ENCODE measurements at regions of chr4 and their contacts with region 1.

Region 1: GRCh38 chr4:73653695-73654106 is 33.5 kb upstream of the RASSF6 start:
- DNase-seq: peak; percentile 11
- H3K4me3 Mint-ChIP-seq: no peak overlapping the region
- H3K27ac Mint-ChIP-seq: no peak overlapping the region
- H3K4me1 Mint-ChIP-seq: no peaks in the 10 kb centered on the region
- H3K27me3 Mint-ChIP-seq: peaks cover 10% of the 10 kb centered on the region

Region 2: DNA sequence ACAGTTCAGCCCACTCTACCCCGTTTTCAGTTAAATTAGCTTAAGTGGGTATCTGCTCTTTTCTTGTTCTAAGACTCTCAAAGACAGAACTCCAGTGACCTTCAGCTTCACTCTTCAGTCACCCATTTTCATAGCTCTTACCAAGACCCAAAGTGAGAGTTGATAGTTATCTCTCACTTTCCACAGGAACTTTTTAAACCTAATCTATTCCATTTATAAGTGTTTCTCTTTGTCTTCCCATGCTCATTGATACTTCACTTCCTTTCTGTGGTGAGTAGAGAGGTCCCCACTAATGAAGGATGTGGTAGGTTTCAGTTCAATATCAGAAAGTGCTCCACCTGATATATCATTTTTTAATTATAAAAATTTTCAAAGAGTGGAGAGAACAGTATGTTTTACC is 617.6 kb before region 1 on chr4:
- CTCF ChIA-PET with region 1: no interaction called
- intact Hi-C with region 1: loop called (anchors 5 kb)
- DNase-seq: no peak
- H3K4me3 Mint-ChIP-seq: no peak overlapping the region
- H3K27ac Mint-ChIP-seq: no peak overlapping the region
- H3K4me1 Mint-ChIP-seq: peaks cover 13% of the 10 kb centered on the region
- H3K27me3 Mint-ChIP-seq: peaks cover 2% of the 10 kb centered on the region

Region 3: GRCh38 chr4:73308286-73308685 is 345.4 kb before region 1 on chr4:
- CTCF ChIA-PET with region 1: interaction called, 3 read pairs
- intact Hi-C with region 1: loop called (anchors 1 kb)
- DNase-seq: no peak
- H3K4me3 Mint-ChIP-seq: no peak overlapping the region
- H3K27ac Mint-ChIP-seq: no peak overlapping the region
- H3K4me1 Mint-ChIP-seq: no peaks in the 10 kb centered on the region
- H3K27me3 Mint-ChIP-seq: no peaks in the 10 kb centered on the region

Region 4: DNA sequence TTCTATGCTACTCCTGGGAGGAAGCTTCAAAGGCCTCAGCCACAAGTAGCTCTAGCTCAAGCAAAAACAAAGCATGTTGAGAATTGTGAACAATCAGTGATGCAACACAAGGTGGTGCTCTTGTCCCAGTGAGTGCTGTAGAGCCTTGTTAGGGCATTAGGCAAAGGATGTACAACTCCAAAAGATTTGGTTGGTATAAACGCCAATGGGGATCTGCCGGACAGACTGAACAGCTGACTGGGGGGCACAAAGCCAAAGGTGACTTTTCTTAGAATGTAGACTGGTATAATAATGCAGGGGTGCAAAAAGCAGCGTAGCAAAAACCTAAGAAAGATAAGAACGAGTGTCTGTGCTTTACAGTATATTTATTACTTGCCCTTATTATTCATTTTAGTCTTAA is 312.2 kb before region 1 on chr4:
- CTCF ChIA-PET with region 1: interaction called, 9 read pairs
- intact Hi-C with region 1: loop called (anchors 1 kb)
- DNase-seq: peak; percentile 36
- H3K4me3 Mint-ChIP-seq: no peak overlapping the region
- H3K27ac Mint-ChIP-seq: no peak overlapping the region
- H3K4me1 Mint-ChIP-seq: no peaks in the 10 kb centered on the region
- H3K27me3 Mint-ChIP-seq: no peaks in the 10 kb centered on the region

Region 5: DNA sequence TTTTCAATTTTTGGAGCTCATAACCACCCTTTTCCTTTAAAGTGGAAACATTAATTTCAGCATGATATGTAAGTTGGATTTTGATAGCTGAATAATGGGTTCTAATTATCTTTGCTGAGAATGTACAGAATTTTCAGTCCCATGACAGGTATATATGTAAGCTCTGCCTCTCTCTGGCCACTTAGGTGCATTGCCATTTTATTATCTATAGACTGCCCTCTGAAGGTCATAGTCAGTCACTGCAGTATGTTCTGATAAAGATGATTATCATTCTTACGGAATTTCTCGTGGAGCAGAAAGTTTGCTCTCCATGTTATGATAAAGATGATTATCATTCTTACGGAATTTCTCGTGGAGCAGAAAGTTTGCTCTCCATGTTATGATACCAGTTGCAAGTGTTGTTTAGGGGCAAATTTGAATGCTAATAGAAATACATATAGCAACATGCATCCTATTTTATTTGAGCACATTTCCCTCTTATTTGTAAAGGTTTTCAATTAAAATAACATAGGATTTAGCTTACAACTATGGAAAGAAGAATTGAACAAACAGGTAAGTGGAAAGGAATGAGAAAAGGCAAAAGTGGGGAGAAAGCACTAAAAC is 207.3 kb before region 1 on chr4:
- CTCF ChIA-PET with region 1: interaction called, 4 read pairs
- intact Hi-C with region 1: loop called (anchors 5 kb)
- DNase-seq: peak; percentile 4
- H3K4me3 Mint-ChIP-seq: no peak overlapping the region
- H3K27ac Mint-ChIP-seq: no peak overlapping the region
- H3K4me1 Mint-ChIP-seq: no peaks in the 10 kb centered on the region
- H3K27me3 Mint-ChIP-seq: peaks cover 11% of the 10 kb centered on the region

Region 6: GRCh38 chr4:73573794-73574406 is 79.8 kb before region 1 on chr4:
- CTCF ChIA-PET with region 1: interaction called, 22 read pairs
- intact Hi-C with region 1: loop called (anchors 1 kb)
- DNase-seq: peak; percentile 45
- H3K4me3 Mint-ChIP-seq: no peak overlapping the region
- H3K27ac Mint-ChIP-seq: no peak overlapping the region
- H3K4me1 Mint-ChIP-seq: no peaks in the 10 kb centered on the region
- H3K27me3 Mint-ChIP-seq: peaks cover 6% of the 10 kb centered on the region

Region 7: DNA sequence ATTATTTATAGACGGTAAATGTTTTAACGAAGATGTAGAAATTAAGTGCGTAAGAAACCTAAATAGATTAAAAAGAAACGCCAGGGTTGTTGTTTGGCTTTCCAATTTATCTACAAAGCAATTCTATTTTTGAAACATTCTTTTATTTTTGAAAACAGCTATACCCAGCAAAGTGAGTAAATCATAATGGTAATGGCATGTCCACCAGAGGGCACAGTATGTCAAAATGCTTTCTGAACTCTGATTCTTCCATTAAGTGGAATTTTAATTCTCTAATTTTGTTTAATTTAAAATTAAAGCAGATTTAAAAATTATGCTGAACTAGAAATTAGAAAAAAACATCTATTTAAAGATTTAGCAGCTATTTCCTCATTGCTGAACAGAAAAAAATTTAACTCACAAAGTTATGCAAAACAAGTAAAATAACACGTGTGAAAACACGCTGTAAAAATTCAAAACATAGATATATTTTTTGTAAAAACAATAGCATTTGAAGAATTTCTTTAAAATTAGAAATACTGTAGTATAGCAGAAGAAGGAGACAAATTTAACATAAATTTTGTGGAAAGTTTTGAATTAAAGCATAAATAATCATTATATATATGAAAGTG is 60.0 kb before region 1 on chr4:
- CTCF ChIA-PET with region 1: no interaction called
- intact Hi-C with region 1: loop called (anchors 2 kb)
- DNase-seq: no peak
- H3K4me3 Mint-ChIP-seq: no peak overlapping the region
- H3K27ac Mint-ChIP-seq: no peak overlapping the region
- H3K4me1 Mint-ChIP-seq: no peaks in the 10 kb centered on the region
- H3K27me3 Mint-ChIP-seq: no peaks in the 10 kb centered on the region

Region 8: DNA sequence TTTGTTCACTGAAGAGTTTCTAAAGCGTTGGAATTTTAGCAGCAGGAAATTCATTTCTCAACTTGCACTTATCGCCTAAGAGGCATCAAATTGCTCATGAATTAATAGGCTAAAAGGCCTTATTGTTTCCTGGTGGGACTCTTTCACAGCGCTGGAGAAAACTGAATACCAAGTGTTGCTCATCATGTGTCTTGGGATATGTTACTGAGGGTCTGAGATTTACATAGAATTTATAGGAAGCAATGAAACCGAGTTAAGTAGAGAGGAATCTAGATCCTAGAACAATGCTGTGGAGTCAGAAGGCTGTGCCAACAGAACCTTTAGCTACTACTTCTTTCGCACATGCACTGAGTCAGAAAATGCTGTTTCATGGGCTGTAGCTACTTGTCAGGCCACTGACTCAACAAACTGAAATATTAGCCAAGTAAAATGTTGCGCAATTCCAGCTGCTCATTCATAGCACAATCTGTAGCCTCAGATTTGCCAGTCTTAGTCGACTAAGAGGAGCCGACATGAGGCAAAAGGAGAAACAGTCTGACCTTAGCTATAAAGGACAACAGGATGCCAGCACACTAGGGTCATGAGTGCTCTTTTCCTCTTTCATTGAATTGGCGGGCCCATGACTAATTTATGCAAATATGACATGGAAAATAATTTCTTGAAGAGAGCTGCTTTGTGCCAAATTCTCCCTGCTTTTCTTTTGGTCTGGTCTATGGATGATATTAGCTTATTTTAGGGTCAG is 50.8 kb after region 1 on chr4:
- CTCF ChIA-PET with region 1: no interaction called
- intact Hi-C with region 1: no loop called
- DNase-seq: no peak
- H3K4me3 Mint-ChIP-seq: no peak overlapping the region
- H3K27ac Mint-ChIP-seq: no peak overlapping the region
- H3K4me1 Mint-ChIP-seq: no peaks in the 10 kb centered on the region
- H3K27me3 Mint-ChIP-seq: no peaks in the 10 kb centered on the region

Region 9: GRCh38 chr4:74598611-74599290 is 945.0 kb after region 1 on chr4:
- CTCF ChIA-PET with region 1: no interaction called
- intact Hi-C with region 1: no loop called
- DNase-seq: no peak
- H3K4me3 Mint-ChIP-seq: no peak overlapping the region
- H3K27ac Mint-ChIP-seq: no peak overlapping the region
- H3K4me1 Mint-ChIP-seq: no peaks in the 10 kb centered on the region
- H3K27me3 Mint-ChIP-seq: no peaks in the 10 kb centered on the region